ENCODE measurements at regions of chr3 and their contacts with region 1.

Region 1: DNA sequence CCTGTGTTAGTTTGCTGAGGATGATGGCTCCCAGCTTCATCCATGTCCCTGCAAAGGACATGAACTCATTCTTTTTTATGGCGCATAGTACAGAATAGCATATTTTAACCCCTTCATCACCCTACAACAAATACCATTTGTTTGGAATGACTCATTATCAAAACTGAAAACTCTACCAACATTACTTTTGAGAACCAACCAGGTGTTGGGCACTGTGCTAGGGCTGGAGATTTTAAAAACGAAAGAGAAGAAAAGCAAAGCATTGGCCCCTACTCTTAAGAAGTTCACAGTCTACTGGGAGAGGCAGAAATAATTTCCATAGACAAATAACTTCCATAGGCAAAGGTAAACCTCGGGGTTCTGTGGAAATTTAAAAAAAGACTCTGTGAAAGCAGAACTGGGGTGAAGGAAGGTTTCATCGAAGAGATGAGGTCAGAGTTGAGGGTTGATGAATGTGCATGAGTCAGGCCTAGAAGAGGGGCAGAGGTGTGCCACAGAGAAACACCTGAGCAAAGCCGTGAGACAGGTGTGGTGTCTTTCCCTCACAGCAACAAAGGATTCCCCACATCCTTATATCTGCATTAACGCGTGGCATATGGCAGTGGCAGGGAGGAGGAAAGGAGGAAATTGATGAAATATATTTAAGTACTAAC is 51.0 kb downstream of the MCF2L2 start:
- DNase-seq: no peak
- ATAC-seq: no peak
- H3K4me3 ChIP-seq: no peak overlapping the region
- H3K27ac ChIP-seq: no peak overlapping the region
- H3K4me1 ChIP-seq: peaks cover 4 to 14% of the 10 kb centered on the region in 2 experiments
- H3K27me3 ChIP-seq: no peaks in the 10 kb centered on the region
- CTCF ChIP-seq: no peak
- EP300 ChIP-seq: no peak
- POLR2A ChIP-seq: no peak
- RAD21 ChIP-seq: no peak

Region 2: GRCh38 chr3:183328823-183329222 is 48.6 kb before region 1 on chr3:
- CTCF ChIA-PET with region 1: no interaction called
- POLR2A ChIA-PET with region 1: no interaction called
- in situ Hi-C with region 1: no loop called
- intact Hi-C with region 1: loop called (anchors 1 kb)
- DNase-seq: no peak
- ATAC-seq: no peak
- H3K4me3 ChIP-seq: no peak overlapping the region
- H3K27ac ChIP-seq: no peak overlapping the region
- H3K4me1 ChIP-seq: peaks cover 10 to 29% of the 10 kb centered on the region in 2 experiments; a peak in 4 of 5 replicates
- H3K27me3 ChIP-seq: no peaks in the 10 kb centered on the region
- CTCF ChIP-seq: no peak
- EP300 ChIP-seq: no peak
- POLR2A ChIP-seq: no peak
- RAD21 ChIP-seq: no peak